Caco-2 (cell line): ENCODE measurements at regions of chr13 and their contacts with region 1.

Region 1: GRCh38 chr13:48037346-48038173 is at the start of gene NUDT15:
- DNase-seq: peak; percentile 96 to 98
- H3K4me3 ChIP-seq: peak within 1 kb of the TSS; percentile 55
- H3K4me3 Mint-ChIP-seq: peak within 1 kb of the TSS; percentile 96
- H3K27ac Mint-ChIP-seq: peak within 1 kb of the TSS; percentile 95
- H3K4me1 ChIP-seq: peaks cover 25% of the 10 kb centered on the region; the same call in 1 of the 2 replicates
- H3K4me1 Mint-ChIP-seq: peaks cover 10% of the 10 kb centered on the region
- H3K27me3 ChIP-seq: no peaks in the 10 kb centered on the region
- H3K27me3 Mint-ChIP-seq: no peaks in the 10 kb centered on the region
- CTCF ChIP-seq: peak; percentile 99 to 100
- total RNA-seq, gene NUDT15: 32.3 and 36.0 TPM in 2 replicates

Region 2: DNA sequence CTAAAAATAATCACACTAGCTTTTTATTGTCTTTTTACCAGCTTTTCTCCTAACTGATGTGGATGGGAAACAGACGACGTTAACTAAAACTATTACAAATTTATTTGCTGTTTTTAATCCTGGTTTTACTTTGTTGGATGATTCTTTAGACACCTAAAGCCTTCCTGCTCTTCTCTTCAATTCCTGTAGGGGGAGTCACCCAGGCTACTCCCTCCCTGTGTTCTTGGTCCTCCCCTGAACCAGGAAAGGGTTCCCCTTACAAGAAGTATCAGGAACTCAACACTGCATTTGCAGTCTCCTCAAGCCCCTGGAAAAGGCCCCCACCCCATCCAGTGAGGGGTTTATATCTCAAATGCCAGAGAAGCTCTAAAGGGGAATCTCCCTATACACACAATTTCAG is 242.6 kb before region 1 on chr13:
- CTCF ChIA-PET with region 1: no interaction called
- POLR2A ChIA-PET with region 1: no interaction called
- intact Hi-C with region 1: loop called (anchors 2 kb)
- DNase-seq: peak in 1 of 2 experiments; percentile 16
- H3K4me3 ChIP-seq: no peak overlapping the region
- H3K4me3 Mint-ChIP-seq: no peak overlapping the region
- H3K27ac Mint-ChIP-seq: no peak overlapping the region
- H3K4me1 ChIP-seq: no peaks in the 10 kb centered on the region
- H3K4me1 Mint-ChIP-seq: no peaks in the 10 kb centered on the region
- H3K27me3 ChIP-seq: no peaks in the 10 kb centered on the region
- H3K27me3 Mint-ChIP-seq: peaks cover 3% of the 10 kb centered on the region
- CTCF ChIP-seq: peak; percentile 36 to 44

Region 3: DNA sequence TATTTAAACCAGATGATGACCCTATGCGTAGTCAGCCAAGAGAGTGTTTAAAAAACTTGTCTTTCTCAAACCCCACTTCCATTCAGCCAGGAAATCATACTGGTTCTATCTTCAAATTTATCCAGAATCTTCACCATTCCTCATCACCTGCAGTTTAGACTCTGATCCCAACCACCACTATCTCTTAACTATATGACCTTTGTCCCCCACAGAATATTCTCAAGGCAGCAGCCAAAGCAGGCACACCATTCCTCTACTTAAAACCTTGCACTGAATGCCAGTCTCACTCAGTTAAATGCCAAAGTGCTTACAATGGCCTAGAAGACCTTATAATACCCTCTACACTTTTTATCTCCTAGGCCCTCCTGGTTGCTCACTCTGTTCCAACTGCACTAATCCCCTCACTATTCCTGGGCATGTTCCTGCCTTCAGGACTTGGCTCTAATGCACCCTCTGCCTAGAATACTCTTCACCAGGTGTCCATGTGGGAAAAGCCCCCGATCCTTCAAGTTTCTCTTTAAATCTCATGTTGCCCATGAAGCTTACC is 46.6 kb before region 1 on chr13:
- CTCF ChIA-PET with region 1: no interaction called
- POLR2A ChIA-PET with region 1: no interaction called
- intact Hi-C with region 1: no loop called
- DNase-seq: peak in 1 of 2 experiments; percentile 11
- H3K4me3 ChIP-seq: no peak overlapping the region
- H3K4me3 Mint-ChIP-seq: peak overlapping the region; percentile 7
- H3K27ac Mint-ChIP-seq: peak overlapping the region; percentile 23
- H3K4me1 ChIP-seq: peaks cover 17% of the 10 kb centered on the region
- H3K4me1 Mint-ChIP-seq: peaks cover 12% of the 10 kb centered on the region
- H3K27me3 ChIP-seq: no peaks in the 10 kb centered on the region
- H3K27me3 Mint-ChIP-seq: no peaks in the 10 kb centered on the region
- CTCF ChIP-seq: no peak

Region 4: GRCh38 chr13:48000778-48001628 is 36.6 kb before region 1 on chr13 and contains the start of gene SUCLA2:
- CTCF ChIA-PET with region 1: interaction called, 11 read pairs
- POLR2A ChIA-PET with region 1: interaction called, 15 read pairs
- intact Hi-C with region 1: loop called (anchors 1 kb)
- DNase-seq: peak; percentile 95 to 98
- H3K4me3 ChIP-seq: peak within 1 kb of the TSS; percentile 92
- H3K4me3 Mint-ChIP-seq: peak within 1 kb of the TSS; percentile 100
- H3K27ac Mint-ChIP-seq: peak within 1 kb of the TSS; percentile 99
- H3K4me1 ChIP-seq: peaks cover 7% of the 10 kb centered on the region
- H3K4me1 Mint-ChIP-seq: peaks cover 26% of the 10 kb centered on the region
- H3K27me3 ChIP-seq: no peaks in the 10 kb centered on the region
- H3K27me3 Mint-ChIP-seq: no peaks in the 10 kb centered on the region
- CTCF ChIP-seq: no peak
- total RNA-seq, gene SUCLA2: 77.8 and 80.8 TPM in 2 replicates

Region 5: DNA sequence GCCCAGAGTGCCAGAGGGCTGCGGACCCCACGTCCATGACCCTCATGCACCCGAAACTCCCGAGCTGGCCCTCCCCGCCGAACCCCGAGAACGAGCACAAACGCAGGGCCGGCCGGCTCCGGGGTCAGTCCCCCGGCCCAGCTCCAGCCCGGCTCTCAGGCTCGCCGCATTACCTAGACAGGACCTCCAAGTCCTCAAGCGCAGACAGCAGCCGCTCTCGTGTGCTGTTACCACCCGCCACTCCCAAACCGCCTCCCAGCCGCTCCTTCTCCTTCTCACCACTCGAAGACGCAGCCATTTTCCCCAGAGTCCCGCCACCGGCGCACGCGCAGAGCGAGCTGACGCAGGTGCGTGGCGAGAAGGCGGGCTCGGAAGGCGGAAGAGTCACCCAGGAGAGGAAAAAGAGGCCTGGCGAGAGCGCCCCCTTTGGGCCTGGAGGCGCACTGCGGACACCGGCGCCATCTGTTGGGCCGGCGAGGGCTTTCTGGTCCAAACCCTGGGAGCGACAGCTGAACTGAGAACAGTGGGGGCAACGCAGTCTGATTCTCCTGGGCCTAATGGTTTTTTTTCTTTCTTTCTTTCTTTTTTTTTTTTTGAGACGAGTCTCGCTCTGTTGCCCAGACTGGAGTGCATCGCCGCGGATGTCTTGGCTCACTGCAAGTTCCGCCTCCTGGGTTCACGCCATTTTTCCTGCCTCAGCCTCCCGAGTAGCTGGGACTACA is 57.4 kb after region 1 on chr13 and contains the start of gene MED4:
- CTCF ChIA-PET with region 1: interaction called, 12 read pairs
- POLR2A ChIA-PET with region 1: interaction called, 6 read pairs
- intact Hi-C with region 1: no loop called
- DNase-seq: peak; percentile 95 to 98
- H3K4me3 ChIP-seq: peak within 1 kb of the TSS; percentile 81
- H3K4me3 Mint-ChIP-seq: peak within 1 kb of the TSS; percentile 91
- H3K27ac Mint-ChIP-seq: peak within 1 kb of the TSS; percentile 97
- H3K4me1 ChIP-seq: peaks cover 25% of the 10 kb centered on the region
- H3K4me1 Mint-ChIP-seq: peaks cover 21% of the 10 kb centered on the region
- H3K27me3 ChIP-seq: no peaks in the 10 kb centered on the region
- H3K27me3 Mint-ChIP-seq: no peaks in the 10 kb centered on the region
- CTCF ChIP-seq: peak; percentile 97 to 100
- total RNA-seq, gene MED4: 56.8 and 62.1 TPM in 2 replicates

Region 6: GRCh38 chr13:49436890-49437289 is 1399.3 kb after region 1 on chr13:
- CTCF ChIA-PET with region 1: no interaction called
- POLR2A ChIA-PET with region 1: no interaction called
- intact Hi-C with region 1: no loop called
- DNase-seq: peak in 1 of 2 experiments; percentile 28
- H3K4me3 ChIP-seq: no peak overlapping the region
- H3K4me3 Mint-ChIP-seq: no peak overlapping the region
- H3K27ac Mint-ChIP-seq: no peak overlapping the region
- H3K4me1 ChIP-seq: no peaks in the 10 kb centered on the region
- H3K4me1 Mint-ChIP-seq: no peaks in the 10 kb centered on the region
- H3K27me3 ChIP-seq: no peaks in the 10 kb centered on the region
- H3K27me3 Mint-ChIP-seq: no peaks in the 10 kb centered on the region
- CTCF ChIP-seq: no peak